Upper lobe of right lung (tissue), 1 donor: ENCODE measurements at regions of chr2 and their contacts with region 1.

Region 1: GRCh38 chr2:72892506-72893173 is 5.4 kb downstream of the SPR start:
- DNase-seq: peak; percentile 84
- ATAC-seq: peak; percentile 79
- H3K4me3 ChIP-seq: no peak overlapping the region
- H3K27ac ChIP-seq: no peak overlapping the region
- H3K4me1 ChIP-seq: peaks cover 17% of the 10 kb centered on the region
- H3K27me3 ChIP-seq: peaks cover 15% of the 10 kb centered on the region
- CTCF ChIP-seq: peak; percentile 72

Region 2: GRCh38 chr2:73085691-73086360 is 193.2 kb after region 1 on chr2:
- intact Hi-C with region 1: no loop called
- DNase-seq: peak; percentile 91
- ATAC-seq: peak; percentile 82
- H3K4me3 ChIP-seq: no peak overlapping the region
- H3K27ac ChIP-seq: no peak overlapping the region
- H3K4me1 ChIP-seq: no peaks in the 10 kb centered on the region
- H3K27me3 ChIP-seq: no peaks in the 10 kb centered on the region
- CTCF ChIP-seq: peak; percentile 96

Region 3: GRCh38 chr2:73163483-73164367 is 271.1 kb after region 1 on chr2:
- intact Hi-C with region 1: loop called (anchors 10 kb)
- DNase-seq: peak; percentile 78
- ATAC-seq: peak; percentile 94
- H3K4me3 ChIP-seq: no peak overlapping the region
- H3K27ac ChIP-seq: no peak overlapping the region
- H3K4me1 ChIP-seq: no peaks in the 10 kb centered on the region
- H3K27me3 ChIP-seq: no peaks in the 10 kb centered on the region
- CTCF ChIP-seq: peak; percentile 93